A673 (cell line): ENCODE measurements at regions of chrX and their contacts with region 1.

Region 1: DNA sequence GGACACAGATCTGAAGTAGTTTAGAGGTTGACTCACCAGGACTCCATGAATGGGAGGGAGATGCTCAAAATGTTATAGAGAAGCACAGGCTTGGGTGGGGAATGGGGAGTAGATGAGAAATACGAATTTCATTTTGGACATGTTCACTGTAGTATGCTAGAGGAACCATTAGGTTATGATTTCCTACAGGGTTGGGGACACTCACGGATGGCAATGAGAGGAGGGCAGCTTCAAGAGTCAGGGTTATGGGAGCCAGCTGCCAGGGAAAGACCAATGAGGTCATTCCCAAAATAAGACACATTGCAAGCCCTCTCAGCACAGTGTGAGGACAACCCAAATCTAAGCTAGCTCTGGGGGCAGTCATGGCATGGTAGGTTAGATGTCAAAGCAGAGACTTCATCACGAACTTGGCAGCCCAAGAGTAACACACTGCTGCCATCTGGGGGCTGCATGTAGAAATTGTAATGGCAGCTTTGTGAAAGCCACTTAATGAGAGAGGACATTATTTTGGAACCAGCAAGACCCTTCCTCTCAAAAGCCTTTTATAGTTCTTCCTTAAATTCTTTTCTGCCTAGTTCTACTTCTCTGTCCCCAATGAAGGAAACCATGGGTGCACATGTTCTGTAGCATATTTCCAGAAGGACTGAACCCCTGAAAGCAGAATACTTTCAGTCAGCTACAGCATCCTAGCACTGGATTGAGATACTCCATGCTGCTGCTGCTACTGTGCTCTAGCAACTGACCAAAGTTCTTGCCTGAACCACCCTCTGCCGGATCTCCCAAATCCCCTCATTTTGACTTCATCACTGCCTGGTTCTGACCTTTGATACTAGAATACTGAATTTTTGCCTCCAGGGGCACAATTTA is 16.2 kb upstream of the ZCCHC12 start:
- DNase-seq: peak; percentile 65
- H3K4me3 ChIP-seq: no peak overlapping the region
- H3K27ac ChIP-seq: no peak overlapping the region
- H3K4me1 ChIP-seq: no peaks in the 10 kb centered on the region
- H3K27me3 ChIP-seq: no peaks in the 10 kb centered on the region
- CTCF ChIP-seq: peak; percentile 70

Region 2: DNA sequence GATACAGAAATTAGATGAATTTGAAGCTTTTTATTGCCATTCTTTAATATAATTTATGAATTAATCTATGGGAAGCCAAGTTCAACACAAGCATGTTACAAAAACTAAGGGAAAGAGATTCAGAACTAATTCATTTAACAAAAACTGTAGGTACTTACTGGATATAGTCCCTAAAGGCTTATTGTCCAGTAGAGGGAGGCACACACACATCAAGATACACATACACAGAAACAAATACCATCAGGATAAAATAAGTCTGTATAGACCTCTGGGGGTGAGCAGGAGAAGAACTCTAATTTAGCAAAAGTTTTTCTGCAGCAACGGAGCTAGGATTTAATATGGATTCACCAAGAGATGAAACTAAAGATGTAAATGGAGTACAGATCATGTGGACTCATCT is 163.0 kb before region 1 on chrX:
- CTCF ChIA-PET with region 1: interaction called, 4 read pairs
- POLR2A ChIA-PET with region 1: no interaction called
- intact Hi-C with region 1: loop called (anchors 2 kb)
- DNase-seq: peak; percentile 54
- H3K4me3 ChIP-seq: no peak overlapping the region
- H3K27ac ChIP-seq: no peak overlapping the region
- H3K4me1 ChIP-seq: no peaks in the 10 kb centered on the region
- H3K27me3 ChIP-seq: no peaks in the 10 kb centered on the region
- CTCF ChIP-seq: peak; percentile 57

Region 3: GRCh38 chrX:118706669-118707068 is 100.7 kb before region 1 on chrX:
- CTCF ChIA-PET with region 1: no interaction called
- POLR2A ChIA-PET with region 1: no interaction called
- intact Hi-C with region 1: no loop called
- DNase-seq: no peak
- H3K4me3 ChIP-seq: no peak overlapping the region
- H3K27ac ChIP-seq: no peak overlapping the region
- H3K4me1 ChIP-seq: no peaks in the 10 kb centered on the region
- H3K27me3 ChIP-seq: no peaks in the 10 kb centered on the region
- CTCF ChIP-seq: no peak

Region 4: DNA sequence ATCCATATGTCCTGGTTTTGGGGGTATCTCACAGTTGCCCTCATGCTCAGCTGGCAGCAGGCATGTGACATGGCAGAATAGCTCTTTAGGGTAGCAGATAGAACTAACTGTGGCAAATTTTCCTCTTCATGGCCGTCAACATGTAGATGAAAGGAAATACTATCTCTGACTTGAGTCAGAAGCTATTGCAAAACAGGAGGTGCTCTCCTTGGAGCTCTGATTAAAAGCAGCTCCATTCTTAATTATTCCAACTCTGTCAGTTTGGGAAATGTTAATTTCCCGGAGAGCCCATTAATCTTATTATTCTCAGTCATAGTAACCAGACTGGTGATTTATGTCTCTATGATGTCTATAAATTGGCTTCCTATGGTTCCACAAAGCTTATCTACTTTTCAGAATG is 61.8 kb before region 1 on chrX:
- CTCF ChIA-PET with region 1: no interaction called
- POLR2A ChIA-PET with region 1: no interaction called
- intact Hi-C with region 1: no loop called
- DNase-seq: peak; percentile 74
- H3K4me3 ChIP-seq: no peak overlapping the region
- H3K27ac ChIP-seq: no peak overlapping the region
- H3K4me1 ChIP-seq: peaks cover 8% of the 10 kb centered on the region
- H3K27me3 ChIP-seq: no peaks in the 10 kb centered on the region
- CTCF ChIP-seq: no peak

Region 5: DNA sequence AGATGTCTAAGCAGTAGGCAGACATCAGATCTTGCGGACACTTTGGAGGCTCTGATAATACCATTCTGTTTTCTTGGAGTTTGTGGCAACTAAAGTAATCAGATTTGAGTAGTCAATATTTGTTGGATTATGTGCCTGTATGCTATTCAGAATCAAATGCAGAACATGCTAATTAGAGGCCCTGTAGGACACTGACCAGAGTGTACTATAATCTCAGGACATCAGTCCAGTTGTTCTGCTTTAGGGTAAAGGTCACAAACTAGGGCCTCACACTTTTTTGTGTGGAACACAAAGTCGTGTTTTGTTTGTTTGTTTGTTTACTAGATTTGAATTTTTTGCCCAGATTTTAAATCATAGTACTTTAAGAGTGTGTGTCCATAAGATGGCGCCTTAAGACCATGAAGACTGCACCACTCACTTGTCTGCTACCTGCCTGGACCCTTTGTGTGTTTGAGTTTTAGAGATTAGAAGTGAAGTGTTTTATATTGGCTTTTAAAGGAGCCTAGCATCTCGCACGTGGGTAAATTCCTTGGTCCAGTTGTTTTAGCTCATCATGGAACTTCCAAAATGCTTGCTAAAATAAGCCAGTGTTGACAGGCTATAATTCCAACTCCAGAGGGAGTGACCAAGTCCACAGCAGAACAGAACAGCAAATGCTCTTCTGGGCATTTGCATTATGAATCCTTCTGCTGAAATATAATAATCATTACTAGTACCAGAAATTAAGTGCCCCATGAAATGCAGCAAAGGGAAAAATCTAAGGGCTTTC is 45.3 kb before region 1 on chrX:
- CTCF ChIA-PET with region 1: no interaction called
- POLR2A ChIA-PET with region 1: no interaction called
- intact Hi-C with region 1: loop called (anchors 5 kb)
- DNase-seq: peak; percentile 7
- H3K4me3 ChIP-seq: no peak overlapping the region
- H3K27ac ChIP-seq: no peak overlapping the region
- H3K4me1 ChIP-seq: no peaks in the 10 kb centered on the region
- H3K27me3 ChIP-seq: no peaks in the 10 kb centered on the region
- CTCF ChIP-seq: peak; percentile 42; the same call in 1 of the 2 replicates